ENCODE measurements at regions of chr7 and their contacts with region 1.

Region 1: DNA sequence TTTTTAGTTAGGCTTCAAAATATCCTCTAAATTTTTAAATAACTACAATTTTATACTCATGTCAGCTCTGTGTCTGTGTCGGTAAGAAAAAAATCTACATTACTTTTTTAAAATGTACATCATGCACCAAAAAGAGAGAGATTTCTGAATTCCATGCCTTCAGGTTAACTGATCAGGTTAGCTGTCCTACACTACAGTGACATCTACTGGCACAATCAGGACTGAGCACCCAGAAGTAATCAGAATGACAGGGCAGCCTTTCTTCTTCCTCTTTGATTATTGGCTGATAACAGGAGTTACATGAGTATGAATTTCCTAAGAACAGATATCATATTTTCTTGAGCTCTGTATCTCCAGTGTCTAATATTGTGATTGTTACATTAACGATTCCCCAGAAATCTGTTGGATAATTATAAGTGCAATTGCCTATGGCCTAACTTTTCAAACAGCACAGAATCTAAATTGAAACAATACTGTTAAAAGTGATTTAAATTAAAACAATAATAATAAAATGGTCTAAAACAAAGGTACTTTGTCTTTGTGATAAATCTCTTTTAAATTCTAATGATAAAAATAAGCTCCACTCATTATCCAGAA is 41.8 kb upstream of the HYCC1 start:
- DNase-seq: peak; percentile 73
- H3K4me3 ChIP-seq: no peak overlapping the region
- H3K27ac ChIP-seq: no peak overlapping the region
- H3K27me3 ChIP-seq: no peaks in the 10 kb centered on the region
- CTCF ChIP-seq: peak; percentile 89

Region 2: GRCh38 chr7:22854158-22855048 is 201.3 kb before region 1 on chr7:
- in situ Hi-C with region 1: loop called (anchors 25 kb)
- DNase-seq: peak; percentile 63
- H3K4me3 ChIP-seq: peak overlapping the region; percentile 71
- H3K27ac ChIP-seq: peak overlapping the region; percentile 99
- H3K27me3 ChIP-seq: no peaks in the 10 kb centered on the region
- CTCF ChIP-seq: no peak

Region 3: GRCh38 chr7:23334482-23335056 is 278.9 kb after region 1 on chr7:
- in situ Hi-C with region 1: no loop called
- DNase-seq: peak; percentile 92
- H3K4me3 ChIP-seq: no peak overlapping the region
- H3K27ac ChIP-seq: peak overlapping the region; percentile 91
- H3K27me3 ChIP-seq: no peaks in the 10 kb centered on the region
- CTCF ChIP-seq: no peak